ENCODE measurements at regions of chr1 and their contacts with region 1.

Region 1: GRCh38 chr1:153494976-153495535 is 34.6 kb upstream of the S100A7 start:
- DNase-seq: peak; percentile 81
- H3K4me3 Mint-ChIP-seq: no peak overlapping the region
- H3K27ac Mint-ChIP-seq: no peak overlapping the region
- H3K4me1 Mint-ChIP-seq: peaks cover 27% of the 10 kb centered on the region
- H3K27me3 Mint-ChIP-seq: peaks cover 39% of the 10 kb centered on the region
- CTCF ChIP-seq: peak; percentile 99

Region 2: GRCh38 chr1:153253693-153254092 is 241.4 kb before region 1 on chr1:
- CTCF ChIA-PET with region 1: no interaction called
- POLR2A ChIA-PET with region 1: no interaction called
- intact Hi-C with region 1: no loop called
- DNase-seq: no peak
- H3K4me3 Mint-ChIP-seq: no peak overlapping the region
- H3K27ac Mint-ChIP-seq: no peak overlapping the region
- H3K4me1 Mint-ChIP-seq: no peaks in the 10 kb centered on the region
- H3K27me3 Mint-ChIP-seq: peaks cover 43% of the 10 kb centered on the region
- CTCF ChIP-seq: no peak

Region 3: GRCh38 chr1:153384958-153385580 is 110.0 kb before region 1 on chr1:
- CTCF ChIA-PET with region 1: interaction called, 11 read pairs
- POLR2A ChIA-PET with region 1: interaction called, 4 read pairs
- intact Hi-C with region 1: no loop called
- DNase-seq: no peak
- H3K4me3 Mint-ChIP-seq: no peak overlapping the region
- H3K27ac Mint-ChIP-seq: peak overlapping the region; percentile 76
- H3K4me1 Mint-ChIP-seq: peaks cover 42% of the 10 kb centered on the region
- H3K27me3 Mint-ChIP-seq: no peaks in the 10 kb centered on the region
- CTCF ChIP-seq: no peak

Region 4: GRCh38 chr1:153404768-153405167 is 90.3 kb before region 1 on chr1:
- CTCF ChIA-PET with region 1: interaction called, 31 read pairs
- POLR2A ChIA-PET with region 1: interaction called, 3 read pairs
- intact Hi-C with region 1: loop called (anchors 2 kb)
- DNase-seq: peak; percentile 73
- H3K4me3 Mint-ChIP-seq: no peak overlapping the region
- H3K27ac Mint-ChIP-seq: no peak overlapping the region
- H3K4me1 Mint-ChIP-seq: no peaks in the 10 kb centered on the region
- H3K27me3 Mint-ChIP-seq: peaks cover 67% of the 10 kb centered on the region
- CTCF ChIP-seq: peak; percentile 86

Region 5: GRCh38 chr1:153465811-153466636 is 29.0 kb before region 1 on chr1:
- CTCF ChIA-PET with region 1: interaction called, 37 read pairs
- POLR2A ChIA-PET with region 1: interaction called, 3 read pairs
- intact Hi-C with region 1: loop called (anchors 1 kb)
- DNase-seq: peak; percentile 72
- H3K4me3 Mint-ChIP-seq: no peak overlapping the region
- H3K27ac Mint-ChIP-seq: no peak overlapping the region
- H3K4me1 Mint-ChIP-seq: no peaks in the 10 kb centered on the region
- H3K27me3 Mint-ChIP-seq: peaks cover 32% of the 10 kb centered on the region
- CTCF ChIP-seq: peak; percentile 93

Region 6: DNA sequence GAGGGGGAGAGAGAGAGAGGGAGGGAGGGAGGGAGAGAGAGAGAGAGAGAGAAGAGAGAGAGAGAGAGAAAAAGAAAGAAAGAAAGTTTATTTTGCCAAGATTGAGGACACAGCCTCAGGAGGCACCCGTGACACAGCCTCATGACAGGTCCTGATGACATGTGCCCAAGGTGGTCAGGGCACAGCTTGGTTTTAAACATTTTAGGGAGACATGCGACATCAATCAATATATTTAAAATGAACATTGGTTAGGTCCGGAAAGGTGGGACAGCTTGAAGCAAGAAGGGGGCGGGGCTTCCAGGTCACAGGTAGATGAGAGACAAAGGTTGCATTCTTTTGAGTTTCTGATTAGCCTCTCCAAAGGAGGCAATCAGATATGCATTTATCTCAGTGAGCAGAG is 25.2 kb after region 1 on chr1:
- CTCF ChIA-PET with region 1: interaction called, 17 read pairs
- POLR2A ChIA-PET with region 1: interaction called, 3 read pairs
- intact Hi-C with region 1: no loop called
- DNase-seq: no peak
- H3K4me3 Mint-ChIP-seq: no peak overlapping the region
- H3K27ac Mint-ChIP-seq: peak overlapping the region; percentile 37
- H3K4me1 Mint-ChIP-seq: peaks cover 28% of the 10 kb centered on the region
- H3K27me3 Mint-ChIP-seq: no peaks in the 10 kb centered on the region
- CTCF ChIP-seq: no peak